A549 (cell line): ENCODE measurements at regions of chr10 and their contacts with region 1.

Region 1: GRCh38 chr10:26334932-26335573 is 103.1 kb upstream of the APBB1IP start:
- DNase-seq: peak; percentile 54 to 81
- ATAC-seq: peak; percentile 96 to 99
- H3K4me3 ChIP-seq: no peak overlapping the region
- H3K27ac ChIP-seq: peak overlapping the region; percentile 60 to 89
- H3K4me1 ChIP-seq: peaks cover 5% of the 10 kb centered on the region; the same call in 1 of the 3 replicates
- CTCF ChIP-seq: peak; percentile 94
- EP300 ChIP-seq: no peak
- POLR2A ChIP-seq: no peak
- RAD21 ChIP-seq: peak; percentile 99

Region 2: DNA sequence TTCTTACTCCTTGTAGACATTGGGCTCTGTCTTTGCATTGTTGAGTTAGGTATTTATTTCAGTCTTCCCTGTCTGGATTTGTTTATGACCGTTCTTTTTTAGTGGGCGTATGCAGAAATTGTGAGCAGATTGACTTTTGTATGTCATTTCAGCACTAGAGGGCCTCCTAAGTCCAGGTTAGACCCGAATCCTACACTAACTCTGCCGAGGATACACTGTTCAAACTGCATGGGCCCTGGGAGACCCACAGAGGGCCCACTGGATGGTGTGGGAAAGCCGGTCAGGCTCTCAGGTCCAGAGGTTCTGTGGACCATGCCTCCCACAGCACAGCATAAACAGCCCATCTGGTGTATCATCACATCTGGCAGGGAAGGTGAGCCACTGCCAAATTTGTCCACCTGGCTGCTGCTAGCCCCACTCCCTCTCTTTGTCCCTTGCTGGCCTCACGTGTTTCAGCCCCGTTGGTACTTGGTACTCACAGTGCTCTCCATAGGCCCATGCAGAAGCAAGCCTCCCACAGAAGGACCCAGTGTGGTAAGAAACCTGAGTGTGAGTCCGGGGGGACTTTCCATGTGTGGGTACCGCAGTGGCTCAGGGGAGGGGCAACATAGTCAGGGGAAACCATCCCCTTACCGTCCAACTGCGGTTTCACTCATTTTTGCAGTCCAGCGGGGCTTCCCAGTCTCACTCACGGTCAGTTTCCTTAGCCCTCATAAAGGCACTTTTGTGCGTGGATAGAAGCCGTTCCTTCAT is 215.9 kb after region 1 on chr10:
- CTCF ChIA-PET with region 1: interaction called, 158 read pairs
- POLR2A ChIA-PET with region 1: interaction called, 3 read pairs
- DNase-seq: peak in 1 of 2 experiments; percentile 54
- ATAC-seq: peak in 1 of 2 experiments; percentile 80; a peak in 3 of 6 replicates
- H3K4me3 ChIP-seq: no peak overlapping the region
- H3K27ac ChIP-seq: peak overlapping the region in 1 of 2 experiments; percentile 56; a peak in 3 of 6 replicates
- H3K4me1 ChIP-seq: peaks cover 10% of the 10 kb centered on the region
- CTCF ChIP-seq: no peak
- EP300 ChIP-seq: no peak
- POLR2A ChIP-seq: no peak
- RAD21 ChIP-seq: peak in 1 of 2 experiments; percentile 42; a peak in 2 of 5 replicates

Region 3: DNA sequence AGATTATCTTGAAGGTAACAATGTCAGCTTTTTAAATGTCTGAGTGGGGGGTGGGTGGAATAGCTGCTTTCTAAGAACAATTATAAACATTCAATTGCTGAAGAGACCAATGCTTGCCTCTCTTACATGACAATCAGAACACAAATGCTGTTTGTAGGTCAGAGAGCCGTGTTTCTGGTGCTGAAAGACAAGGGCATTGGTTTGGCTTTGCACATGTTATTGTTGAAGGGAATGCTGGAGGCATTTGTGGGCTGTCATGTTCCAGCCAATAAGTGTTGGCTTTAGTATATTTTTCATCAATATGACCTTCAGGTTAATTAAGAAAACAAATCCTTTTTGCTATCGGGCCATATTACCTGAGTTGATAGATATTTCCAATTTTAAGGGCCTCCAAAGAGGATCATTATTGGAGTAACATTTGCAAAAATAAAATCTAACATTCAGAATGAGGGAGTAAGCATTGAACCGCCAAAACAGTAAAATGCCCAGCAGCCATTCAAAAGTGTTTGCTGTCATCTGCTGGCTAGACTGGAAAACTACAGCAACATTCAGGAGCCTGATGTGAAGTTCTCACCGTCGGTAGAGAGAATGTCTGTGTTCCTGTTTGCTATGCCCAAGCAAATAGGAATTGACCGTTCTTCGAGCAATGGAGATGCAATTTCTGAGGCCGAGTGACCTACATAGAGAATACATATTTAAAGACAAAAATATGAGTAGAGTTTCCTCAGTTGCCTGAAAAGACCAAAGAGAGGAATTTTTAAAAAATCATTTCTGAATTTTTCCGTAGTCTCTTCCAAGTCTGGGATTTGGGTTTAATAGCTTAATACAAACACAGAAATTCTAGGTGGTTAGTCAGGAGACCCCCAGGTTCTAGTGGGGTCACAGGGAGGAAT is 221.9 kb after region 1 on chr10:
- CTCF ChIA-PET with region 1: interaction called, 158 read pairs
- POLR2A ChIA-PET with region 1: interaction called, 3 read pairs
- DNase-seq: peak; percentile 73 to 75
- ATAC-seq: peak; percentile 74 to 83; a peak in 5 of 6 replicates
- H3K4me3 ChIP-seq: no peak overlapping the region
- H3K27ac ChIP-seq: peak overlapping the region; percentile 77 to 81
- H3K4me1 ChIP-seq: peaks cover 30% of the 10 kb centered on the region
- CTCF ChIP-seq: peak; percentile 98
- EP300 ChIP-seq: no peak
- POLR2A ChIP-seq: no peak
- RAD21 ChIP-seq: peak; percentile 99